CD4-positive, alpha-beta memory T cell (primary cell): ENCODE measurements at regions of chr20 and their contacts with region 1.

Region 1: DNA sequence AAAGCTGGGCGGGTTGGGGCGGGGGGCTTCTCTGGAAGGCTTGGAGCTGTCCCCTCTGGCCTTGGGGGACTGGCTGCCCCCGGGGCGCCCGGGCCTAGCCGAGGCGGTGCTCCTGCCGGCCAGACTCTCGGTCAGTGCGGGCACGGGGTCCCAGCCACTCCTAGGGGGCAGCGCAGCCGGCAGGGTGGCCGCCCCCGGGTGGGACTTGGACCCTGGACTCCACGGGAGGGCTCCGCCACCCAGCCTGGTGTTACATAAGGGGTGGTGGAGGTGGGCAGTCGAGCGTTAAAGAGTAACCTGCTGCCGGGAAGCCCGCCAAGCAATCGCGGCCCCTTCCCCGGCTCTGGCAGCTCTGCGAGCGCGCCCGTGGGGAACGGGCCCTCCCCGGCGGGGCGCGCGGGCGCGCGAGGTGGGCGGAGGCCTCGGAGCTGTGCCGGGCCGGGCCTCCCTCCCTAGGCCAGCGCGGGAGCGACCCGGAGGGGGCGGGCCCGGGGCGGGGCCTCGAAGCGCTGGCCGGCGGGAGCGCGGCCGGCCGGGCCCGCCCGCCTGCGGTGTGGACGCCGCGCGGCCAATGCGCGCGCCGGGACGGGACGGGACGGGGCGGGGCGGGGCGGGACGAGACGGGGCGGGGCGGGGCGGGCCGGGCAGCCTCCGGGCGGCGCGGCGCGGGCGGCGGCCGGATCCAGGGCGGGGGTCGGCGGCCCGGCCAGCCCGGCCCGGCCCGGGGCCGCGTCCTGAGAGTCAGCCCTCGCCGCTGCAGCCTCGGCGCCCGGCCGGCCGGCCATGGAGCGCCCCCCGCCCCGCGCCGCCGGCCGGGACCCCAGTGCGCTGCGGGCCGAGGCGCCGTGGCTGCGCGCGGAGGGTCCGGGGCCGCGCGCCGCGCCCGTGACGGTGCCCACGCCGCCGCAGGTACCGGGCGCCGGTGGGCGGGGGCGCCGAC is at the start of gene SLC2A4RG:
- DNase-seq: peak; percentile 61 to 76 (median 72)
- H3K4me3 ChIP-seq: peak within 1 kb of the TSS; percentile 42 to 92
- H3K4me3 Mint-ChIP-seq: peak within 1 kb of the TSS; percentile 44 to 91 (median 60)
- H3K27ac ChIP-seq: peak within 1 kb of the TSS; percentile 54
- H3K27ac Mint-ChIP-seq: peak within 1 kb of the TSS in 4 of 7 donors; percentile 22 to 65 (median 43)
- H3K4me1 ChIP-seq: peaks cover 33% of the 10 kb centered on the region
- H3K4me1 Mint-ChIP-seq: peaks cover 6 to 17% (median 10%) of the 10 kb centered on the region in 4 donors
- H3K27me3 ChIP-seq: no peaks in the 10 kb centered on the region
- H3K27me3 Mint-ChIP-seq: no peaks in the 10 kb centered on the region
- total RNA-seq, gene SLC2A4RG: 121 to 124 TPM

Region 2: GRCh38 chr20:63627129-63627750 is 112.2 kb before region 1 on chr20:
- CTCF ChIA-PET with region 1: no interaction called
- POLR2A ChIA-PET with region 1: interaction called, 26 read pairs
- intact Hi-C with region 1: no loop called
- DNase-seq: peak; percentile 92 to 99 (median 96)
- H3K4me3 ChIP-seq: peak overlapping the region; percentile 91 to 95
- H3K4me3 Mint-ChIP-seq: peak overlapping the region; percentile 94 to 99 (median 96)
- H3K27ac ChIP-seq: peak overlapping the region; percentile 86
- H3K27ac Mint-ChIP-seq: peak overlapping the region; percentile 57 to 96 (median 90)
- H3K4me1 ChIP-seq: peaks cover 41% of the 10 kb centered on the region
- H3K4me1 Mint-ChIP-seq: peaks cover 19 to 54% (median 37%) of the 10 kb centered on the region in 4 donors
- H3K27me3 ChIP-seq: no peaks in the 10 kb centered on the region
- H3K27me3 Mint-ChIP-seq: no peaks in the 10 kb centered on the region

Region 3: GRCh38 chr20:63641792-63642544 is 97.4 kb before region 1 on chr20:
- CTCF ChIA-PET with region 1: interaction called, 8 read pairs
- POLR2A ChIA-PET with region 1: interaction called, 51 read pairs
- intact Hi-C with region 1: loop called (anchors 2 kb)
- DNase-seq: peak; percentile 96 to 98 (median 97)
- H3K4me3 ChIP-seq: peak overlapping the region; percentile 57 to 92
- H3K4me3 Mint-ChIP-seq: peak overlapping the region; percentile 61 to 90 (median 80)
- H3K27ac ChIP-seq: peak overlapping the region; percentile 76
- H3K27ac Mint-ChIP-seq: peak overlapping the region in 4 of 7 donors; percentile 47 to 89 (median 82)
- H3K4me1 ChIP-seq: peaks cover 31% of the 10 kb centered on the region
- H3K4me1 Mint-ChIP-seq: peaks cover 13 to 43% (median 28%) of the 10 kb centered on the region in 4 donors
- H3K27me3 ChIP-seq: no peaks in the 10 kb centered on the region
- H3K27me3 Mint-ChIP-seq: peaks cover 0 to 2% of the 10 kb centered on the region in 2 donors

Region 4: GRCh38 chr20:63698739-63699465 is 40.5 kb before region 1 on chr20:
- CTCF ChIA-PET with region 1: no interaction called
- POLR2A ChIA-PET with region 1: interaction called, 18 read pairs
- intact Hi-C with region 1: no loop called
- DNase-seq: no peak
- H3K4me3 ChIP-seq: no peak overlapping the region
- H3K4me3 Mint-ChIP-seq: no peak overlapping the region
- H3K27ac ChIP-seq: no peak overlapping the region
- H3K27ac Mint-ChIP-seq: peak overlapping the region in 2 of 7 donors; percentile 47 to 48
- H3K4me1 ChIP-seq: peaks cover 47% of the 10 kb centered on the region
- H3K4me1 Mint-ChIP-seq: peaks cover 6 to 39% (median 17%) of the 10 kb centered on the region in 4 donors
- H3K27me3 ChIP-seq: no peaks in the 10 kb centered on the region
- H3K27me3 Mint-ChIP-seq: no peaks in the 10 kb centered on the region

Region 5: GRCh38 chr20:63718996-63719395 is 20.4 kb before region 1 on chr20:
- CTCF ChIA-PET with region 1: interaction called, 3 read pairs
- POLR2A ChIA-PET with region 1: interaction called, 25 read pairs
- intact Hi-C with region 1: no loop called
- DNase-seq: no peak
- H3K4me3 ChIP-seq: no peak overlapping the region
- H3K4me3 Mint-ChIP-seq: no peak overlapping the region
- H3K27ac ChIP-seq: no peak overlapping the region
- H3K27ac Mint-ChIP-seq: peak overlapping the region in 1 of 7 donors; percentile 29
- H3K4me1 ChIP-seq: peaks cover 12% of the 10 kb centered on the region
- H3K4me1 Mint-ChIP-seq: peaks cover 25 to 43% (median 30%) of the 10 kb centered on the region in 4 donors
- H3K27me3 ChIP-seq: no peaks in the 10 kb centered on the region
- H3K27me3 Mint-ChIP-seq: no peaks in the 10 kb centered on the region

Region 6: DNA sequence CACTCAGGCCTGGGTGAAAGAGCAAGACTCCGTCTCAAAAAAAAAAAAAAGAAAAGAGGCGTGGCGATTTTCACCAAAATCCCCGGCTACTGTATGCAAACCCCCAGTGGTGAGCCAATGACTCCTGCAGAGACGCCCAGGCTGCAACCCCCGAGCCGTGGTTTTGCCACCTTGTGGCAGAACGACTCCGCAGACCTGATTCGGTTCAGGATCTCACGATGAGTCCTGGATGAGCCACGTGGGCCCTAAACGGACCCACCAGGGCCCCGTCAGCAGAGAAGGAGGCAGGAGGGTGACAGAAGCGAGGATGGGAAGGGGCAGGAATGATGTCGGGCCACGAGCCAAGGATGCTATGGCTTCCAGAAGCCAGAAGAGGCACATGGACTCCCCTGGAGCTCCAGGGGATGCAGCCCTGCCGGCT is 42.7 kb after region 1 on chr20:
- CTCF ChIA-PET with region 1: interaction called, 11 read pairs
- POLR2A ChIA-PET with region 1: interaction called, 8 read pairs
- intact Hi-C with region 1: loop called (anchors 1 kb)
- DNase-seq: peak; percentile 65 to 83 (median 73)
- H3K4me3 ChIP-seq: no peak overlapping the region
- H3K4me3 Mint-ChIP-seq: peak overlapping the region in 6 of 8 donors; percentile 55 to 80 (median 70)
- H3K27ac ChIP-seq: no peak overlapping the region
- H3K27ac Mint-ChIP-seq: peak overlapping the region; percentile 17 to 90 (median 82)
- H3K4me1 ChIP-seq: peaks cover 14% of the 10 kb centered on the region
- H3K4me1 Mint-ChIP-seq: peaks cover 16 to 27% (median 17%) of the 10 kb centered on the region in 4 donors
- H3K27me3 ChIP-seq: no peaks in the 10 kb centered on the region
- H3K27me3 Mint-ChIP-seq: no peaks in the 10 kb centered on the region

Region 7: DNA sequence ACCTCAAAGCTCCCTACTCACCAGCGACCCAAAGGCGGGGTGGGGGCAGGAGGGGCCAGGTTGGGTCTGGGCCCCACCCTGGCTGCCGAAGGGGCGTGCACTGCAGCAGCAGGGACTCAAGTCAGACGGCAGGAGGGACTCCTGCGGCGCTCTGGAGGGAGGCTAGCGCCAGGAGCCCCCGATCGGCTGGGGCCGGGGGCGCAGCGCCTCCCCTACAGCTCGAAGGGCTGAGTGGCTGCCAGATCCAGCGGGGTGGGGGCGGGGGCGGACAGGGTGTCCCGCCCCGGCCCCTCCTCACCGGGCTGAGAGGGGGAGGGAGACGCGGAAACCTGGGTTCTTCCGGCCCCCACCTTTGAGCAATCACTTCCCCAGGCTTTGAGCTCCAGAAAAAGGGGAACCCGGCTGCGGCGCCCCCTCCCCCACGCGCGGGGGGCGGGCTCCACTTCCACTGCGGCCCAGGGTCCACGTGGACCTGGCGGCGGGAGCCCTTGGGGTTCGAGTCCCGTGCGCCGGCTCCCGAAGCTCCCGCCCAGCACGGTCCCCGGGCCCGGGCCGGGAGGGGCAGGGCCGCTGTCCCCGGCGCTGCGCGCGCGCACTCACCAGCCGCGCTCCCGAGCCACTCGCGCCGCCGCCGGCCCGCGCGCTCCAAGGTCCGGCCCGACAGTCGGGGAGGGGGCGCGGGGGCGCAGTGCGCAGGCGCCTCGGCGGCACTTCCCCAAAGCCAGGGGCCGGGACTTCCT is 340.0 kb after region 1 on chr20 and contains the start of gene RGS19:
- CTCF ChIA-PET with region 1: no interaction called
- POLR2A ChIA-PET with region 1: interaction called, 22 read pairs
- intact Hi-C with region 1: no loop called
- DNase-seq: peak; percentile 64 to 80 (median 67)
- H3K4me3 ChIP-seq: peak within 1 kb of the TSS; percentile 73 to 97
- H3K4me3 Mint-ChIP-seq: peak within 1 kb of the TSS; percentile 86 to 95 (median 90)
- H3K27ac ChIP-seq: peak within 1 kb of the TSS; percentile 74
- H3K27ac Mint-ChIP-seq: peak within 1 kb of the TSS; percentile 83 to 93 (median 92)
- H3K4me1 ChIP-seq: peaks cover 47% of the 10 kb centered on the region
- H3K4me1 Mint-ChIP-seq: peaks cover 10 to 61% (median 34%) of the 10 kb centered on the region in 4 donors
- H3K27me3 ChIP-seq: no peaks in the 10 kb centered on the region
- H3K27me3 Mint-ChIP-seq: no peaks in the 10 kb centered on the region
- total RNA-seq, gene RGS19: 35.0 to 35.6 TPM